Calu3 (cell line): ENCODE measurements at regions of chr18 and their contacts with region 1.

Region 1: GRCh38 chr18:12092398-12093229 is 1.0 kb upstream of the ANKRD62 start:
- DNase-seq: peak; percentile 73
- H3K4me3 Mint-ChIP-seq: peak overlapping the region; percentile 15
- H3K27ac Mint-ChIP-seq: peak overlapping the region; percentile 23
- H3K4me1 Mint-ChIP-seq: no peaks in the 10 kb centered on the region
- H3K27me3 Mint-ChIP-seq: peaks cover 27% of the 10 kb centered on the region
- CTCF ChIP-seq: peak; percentile 58

Region 2: DNA sequence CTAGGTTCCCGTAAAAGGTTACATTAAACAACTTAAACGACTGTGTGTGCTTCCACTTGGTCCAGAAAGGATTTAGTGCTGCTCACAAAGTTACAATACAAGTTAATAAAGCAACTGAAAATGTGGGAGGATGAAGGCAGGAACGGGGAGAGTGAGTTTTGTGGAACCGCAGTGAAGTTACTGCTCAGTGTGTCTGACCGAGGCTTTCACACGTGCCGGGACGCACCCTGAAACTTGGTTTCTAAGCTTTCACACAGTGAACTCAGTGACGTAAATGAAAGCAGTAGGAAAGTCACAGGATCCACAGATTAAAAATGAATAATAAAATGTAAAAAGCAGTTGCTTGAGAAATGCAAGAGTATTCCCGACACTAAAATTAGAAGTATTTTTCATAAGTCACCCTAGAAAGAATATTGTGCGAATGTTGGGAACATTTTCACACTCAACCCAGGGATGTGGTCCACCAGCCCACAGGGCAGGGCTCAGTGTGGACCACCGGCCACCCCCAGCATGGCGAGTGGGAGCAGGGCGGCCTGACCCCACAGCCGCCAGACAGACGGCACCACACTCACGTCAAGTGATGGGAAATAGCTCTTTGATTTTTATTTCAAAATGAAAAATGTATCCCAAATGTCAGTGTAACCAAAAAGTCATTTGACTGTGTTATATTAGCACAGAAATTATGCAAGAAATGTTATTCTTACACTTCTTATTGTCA is 274.0 kb before region 1 on chr18:
- CTCF ChIA-PET with region 1: no interaction called
- intact Hi-C with region 1: no loop called
- DNase-seq: no peak
- H3K4me3 Mint-ChIP-seq: no peak overlapping the region
- H3K27ac Mint-ChIP-seq: no peak overlapping the region
- H3K4me1 Mint-ChIP-seq: no peaks in the 10 kb centered on the region
- H3K27me3 Mint-ChIP-seq: peaks cover 12% of the 10 kb centered on the region
- CTCF ChIP-seq: no peak

Region 3: DNA sequence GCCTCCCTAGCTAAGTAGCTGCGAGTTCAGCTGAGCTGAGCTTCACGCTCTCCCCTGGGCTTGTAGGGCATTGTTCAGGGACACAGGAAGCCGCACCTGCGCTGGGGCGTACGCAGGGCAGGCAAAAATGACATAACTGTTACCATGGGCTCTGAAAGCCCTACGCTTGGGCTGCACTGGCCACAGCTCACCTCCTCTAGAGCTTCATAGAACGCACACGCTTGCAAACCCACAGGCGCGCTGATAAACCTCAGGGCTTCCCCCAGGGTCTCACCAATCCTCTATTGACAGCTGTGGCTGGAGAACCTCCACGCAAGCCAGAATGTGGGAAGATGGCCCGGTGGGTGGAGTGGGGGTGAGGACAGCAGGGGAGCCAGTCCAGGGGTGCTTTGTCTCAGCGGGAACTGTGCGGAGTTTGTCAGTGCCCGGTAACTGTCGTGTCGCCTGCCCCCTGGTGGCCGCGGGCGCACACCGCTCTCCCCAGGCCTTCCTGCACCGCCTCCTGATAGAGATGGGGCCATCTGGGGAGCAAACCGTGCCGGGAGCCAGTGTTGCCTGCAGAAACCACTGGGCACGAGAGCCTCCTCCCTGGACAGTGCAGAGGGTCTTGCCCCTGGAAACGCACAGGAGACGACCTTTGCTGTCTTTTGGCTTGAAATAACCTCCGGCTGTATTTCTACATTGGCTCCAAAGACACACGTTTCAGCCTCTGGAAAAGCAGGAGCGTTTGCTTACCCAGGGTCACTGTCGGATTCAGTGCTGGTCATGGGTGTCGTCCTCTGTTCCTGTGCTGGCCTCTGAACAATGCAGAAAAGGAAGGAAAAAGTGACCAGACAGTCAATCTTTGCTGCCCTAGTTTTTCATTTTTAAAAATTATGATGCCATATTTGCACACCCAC is 144.6 kb after region 1 on chr18:
- CTCF ChIA-PET with region 1: interaction called, 4 read pairs
- intact Hi-C with region 1: loop called (anchors 2 kb)
- DNase-seq: peak; percentile 90
- H3K4me3 Mint-ChIP-seq: no peak overlapping the region
- H3K27ac Mint-ChIP-seq: no peak overlapping the region
- H3K4me1 Mint-ChIP-seq: no peaks in the 10 kb centered on the region
- H3K27me3 Mint-ChIP-seq: peaks cover 78% of the 10 kb centered on the region
- CTCF ChIP-seq: peak; percentile 83

Region 4: GRCh38 chr18:12287684-12288402 is 195.2 kb after region 1 on chr18:
- CTCF ChIA-PET with region 1: no interaction called
- intact Hi-C with region 1: loop called (anchors 5 kb)
- DNase-seq: peak; percentile 77
- H3K4me3 Mint-ChIP-seq: peak overlapping the region; percentile 82
- H3K27ac Mint-ChIP-seq: no peak overlapping the region
- H3K4me1 Mint-ChIP-seq: peaks cover 16% of the 10 kb centered on the region
- H3K27me3 Mint-ChIP-seq: peaks cover 33% of the 10 kb centered on the region
- CTCF ChIP-seq: no peak